HepG2 (cell line): ENCODE measurements at regions of chr1 and their contacts with region 1.

Region 1: GRCh38 chr1:235657747-235658526 is 8.4 kb upstream of the GNG4 start:
- DNase-seq: peak; percentile 52
- ATAC-seq: peak; percentile 88
- H3K4me3 ChIP-seq: peak overlapping the region in 2 of 3 experiments; percentile 6 to 24; a peak in 2 of 6 replicates
- H3K27ac ChIP-seq: peak overlapping the region; percentile 39
- H3K4me1 ChIP-seq: peaks cover 32% of the 10 kb centered on the region
- H3K27me3 ChIP-seq: no peaks in the 10 kb centered on the region
- CTCF ChIP-seq: no peak
- EP300 ChIP-seq: 0 out of 4 replicates have a peak, but pooled peaks of 1 of the 2 experiments have one; percentile 9
- POLR2A ChIP-seq: no peak
- RAD21 ChIP-seq: no peak

Region 2: DNA sequence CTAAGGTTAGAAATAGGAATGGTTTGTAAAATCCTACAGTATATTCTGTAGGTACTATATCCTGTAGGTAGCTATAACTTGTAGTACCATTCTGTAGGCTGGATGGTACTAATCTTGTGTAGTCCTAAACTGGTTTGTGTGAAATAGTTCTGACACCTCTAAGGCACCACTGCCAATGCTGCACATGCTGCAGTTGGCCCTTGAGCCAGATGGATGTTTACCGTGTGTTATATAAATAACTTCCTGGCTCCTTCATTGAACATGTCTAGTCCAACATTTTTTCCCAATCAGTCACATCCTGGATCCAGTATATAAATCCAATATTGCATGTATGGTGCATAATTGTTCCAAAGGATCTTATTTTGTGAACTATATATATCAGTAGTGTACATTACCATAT is 81.2 kb after region 1 on chr1:
- CTCF ChIA-PET with region 1: no interaction called
- POLR2A ChIA-PET with region 1: no interaction called
- in situ Hi-C with region 1: no loop called
- intact Hi-C with region 1: loop called (anchors 5 kb)
- DNase-seq: peak; percentile 25
- ATAC-seq: peak; percentile 31; the same call in 1 of the 3 replicates
- H3K4me3 ChIP-seq: no peak overlapping the region
- H3K27ac ChIP-seq: no peak overlapping the region
- H3K4me1 ChIP-seq: peaks cover 13% of the 10 kb centered on the region
- H3K27me3 ChIP-seq: no peaks in the 10 kb centered on the region
- CTCF ChIP-seq: no peak
- EP300 ChIP-seq: no peak
- POLR2A ChIP-seq: no peak
- RAD21 ChIP-seq: no peak